Caco-2 (cell line): ENCODE measurements at regions of chr6 and their contacts with region 1.

Region 1: DNA sequence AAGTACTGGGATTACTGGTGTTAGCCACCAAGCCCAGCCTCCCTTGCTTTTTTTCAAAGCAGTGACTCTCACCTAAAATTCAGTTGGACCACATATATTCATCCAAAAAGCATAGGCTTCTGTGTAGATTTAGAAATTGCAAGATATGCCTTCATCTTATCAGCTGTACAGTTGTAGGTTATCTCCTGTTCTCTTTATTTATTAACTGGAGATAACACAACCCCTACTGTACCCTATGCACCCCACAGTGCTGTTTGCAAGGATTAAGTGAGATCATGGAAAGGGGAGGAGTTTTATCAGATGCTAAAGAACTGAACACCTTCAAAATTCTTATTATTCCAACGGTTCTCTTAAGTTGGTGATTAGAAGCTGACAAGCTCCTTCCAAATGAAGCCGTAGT is 164.4 kb upstream of the JARID2 start:
- DNase-seq: peak; percentile 43 to 46
- H3K4me3 ChIP-seq: no peak overlapping the region
- H3K4me3 Mint-ChIP-seq: no peak overlapping the region
- H3K27ac Mint-ChIP-seq: no peak overlapping the region
- H3K4me1 ChIP-seq: peaks cover 18% of the 10 kb centered on the region
- H3K4me1 Mint-ChIP-seq: peaks cover 19% of the 10 kb centered on the region
- H3K27me3 ChIP-seq: no peaks in the 10 kb centered on the region
- H3K27me3 Mint-ChIP-seq: no peaks in the 10 kb centered on the region
- CTCF ChIP-seq: no peak

Region 2: DNA sequence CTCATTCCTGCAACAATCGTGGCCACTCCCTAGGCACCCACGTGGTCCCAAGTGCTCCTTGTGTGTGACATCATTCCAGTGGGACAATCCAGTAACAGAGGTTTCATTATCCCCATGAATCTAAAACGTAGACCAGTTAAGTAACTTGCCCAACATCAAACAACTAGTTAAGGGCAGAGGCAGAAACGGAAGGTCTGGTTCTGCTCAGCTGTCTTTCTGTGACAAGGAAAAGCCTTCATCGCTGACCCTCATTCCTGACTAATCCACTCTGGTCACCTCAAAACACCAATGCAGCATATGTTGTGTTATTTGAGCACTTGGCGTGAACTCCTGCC is 97.0 kb before region 1 on chr6:
- CTCF ChIA-PET with region 1: no interaction called
- POLR2A ChIA-PET with region 1: no interaction called
- intact Hi-C with region 1: no loop called
- DNase-seq: peak; percentile 19 to 37
- H3K4me3 ChIP-seq: no peak overlapping the region
- H3K4me3 Mint-ChIP-seq: peak overlapping the region; percentile 31
- H3K27ac Mint-ChIP-seq: no peak overlapping the region
- H3K4me1 ChIP-seq: no peaks in the 10 kb centered on the region
- H3K4me1 Mint-ChIP-seq: peaks cover 7% of the 10 kb centered on the region
- H3K27me3 ChIP-seq: no peaks in the 10 kb centered on the region
- H3K27me3 Mint-ChIP-seq: no peaks in the 10 kb centered on the region
- CTCF ChIP-seq: no peak

Region 3: DNA sequence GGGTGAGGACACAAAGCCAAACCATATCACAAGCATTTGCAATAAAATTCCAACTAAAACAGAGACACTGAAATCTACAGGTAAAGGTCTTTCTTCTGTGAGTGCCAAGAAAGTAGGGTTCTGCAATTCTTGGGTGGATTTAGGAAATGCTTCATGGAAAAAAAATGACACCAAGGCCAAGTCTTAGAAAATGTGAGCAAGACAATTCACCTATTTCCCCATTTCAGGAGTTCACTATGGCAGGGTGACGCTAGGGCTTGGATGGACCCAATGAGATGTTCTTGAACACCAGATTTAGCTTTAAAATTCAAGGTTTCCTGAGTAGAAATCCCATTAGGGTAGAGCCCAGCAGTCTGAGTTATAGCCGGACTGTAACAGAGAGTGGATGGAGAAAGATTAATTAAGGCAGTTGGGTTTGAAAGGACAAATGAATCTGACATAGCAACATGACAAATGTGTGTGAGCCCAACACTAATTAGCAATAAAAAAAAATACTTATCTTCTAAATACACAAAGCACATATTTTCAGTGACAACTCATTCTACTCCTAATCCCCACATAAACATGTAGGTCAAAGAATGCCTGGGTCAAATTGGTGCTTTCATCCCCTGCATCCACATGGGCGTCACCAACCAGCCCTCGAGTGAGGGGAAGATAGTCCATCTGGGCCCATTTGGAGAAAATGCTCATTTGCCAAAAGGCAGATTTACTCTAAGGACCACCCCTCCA is 16.0 kb before region 1 on chr6:
- CTCF ChIA-PET with region 1: no interaction called
- POLR2A ChIA-PET with region 1: no interaction called
- intact Hi-C with region 1: loop called (anchors 1 kb)
- DNase-seq: peak; percentile 68 to 79
- H3K4me3 ChIP-seq: no peak overlapping the region
- H3K4me3 Mint-ChIP-seq: no peak overlapping the region
- H3K27ac Mint-ChIP-seq: peak overlapping the region; percentile 5
- H3K4me1 ChIP-seq: peaks cover 19% of the 10 kb centered on the region
- H3K4me1 Mint-ChIP-seq: peaks cover 17% of the 10 kb centered on the region
- H3K27me3 ChIP-seq: no peaks in the 10 kb centered on the region
- H3K27me3 Mint-ChIP-seq: no peaks in the 10 kb centered on the region
- CTCF ChIP-seq: no peak